H1 (cell line): ENCODE measurements at regions of chr17 and their contacts with region 1.

Region 1: GRCh38 chr17:37373530-37374159 is 2.1 kb upstream of the C17orf78 start:
- DNase-seq: peak; percentile 66 to 67
- H3K4me3 ChIP-seq: no peak overlapping the region
- H3K27ac ChIP-seq: no peak overlapping the region
- H3K4me1 ChIP-seq: no peaks in the 10 kb centered on the region; a peak in 1 of 7 replicates
- H3K27me3 ChIP-seq: no peaks in the 10 kb centered on the region
- CTCF ChIP-seq: peak; percentile 69 to 100 (median 100)
- EP300 ChIP-seq: no peak
- POLR2A ChIP-seq: no peak
- RAD21 ChIP-seq: peak; percentile 99

Region 2: GRCh38 chr17:37299257-37299980 is 74.2 kb before region 1 on chr17:
- CTCF ChIA-PET with region 1: interaction called, 15 read pairs
- POLR2A ChIA-PET with region 1: no interaction called
- DNase-seq: peak in 1 of 2 experiments; percentile 35
- H3K4me3 ChIP-seq: no peak overlapping the region
- H3K27ac ChIP-seq: peak overlapping the region; percentile 49; the same call in 1 of the 2 replicates
- H3K4me1 ChIP-seq: peaks cover 9 to 25% (median 16%) of the 10 kb centered on the region in 4 experiments; a peak in 5 of 7 replicates
- H3K27me3 ChIP-seq: no peaks in the 10 kb centered on the region
- CTCF ChIP-seq: no peak
- EP300 ChIP-seq: no peak
- POLR2A ChIP-seq: no peak
- RAD21 ChIP-seq: no peak

Region 3: DNA sequence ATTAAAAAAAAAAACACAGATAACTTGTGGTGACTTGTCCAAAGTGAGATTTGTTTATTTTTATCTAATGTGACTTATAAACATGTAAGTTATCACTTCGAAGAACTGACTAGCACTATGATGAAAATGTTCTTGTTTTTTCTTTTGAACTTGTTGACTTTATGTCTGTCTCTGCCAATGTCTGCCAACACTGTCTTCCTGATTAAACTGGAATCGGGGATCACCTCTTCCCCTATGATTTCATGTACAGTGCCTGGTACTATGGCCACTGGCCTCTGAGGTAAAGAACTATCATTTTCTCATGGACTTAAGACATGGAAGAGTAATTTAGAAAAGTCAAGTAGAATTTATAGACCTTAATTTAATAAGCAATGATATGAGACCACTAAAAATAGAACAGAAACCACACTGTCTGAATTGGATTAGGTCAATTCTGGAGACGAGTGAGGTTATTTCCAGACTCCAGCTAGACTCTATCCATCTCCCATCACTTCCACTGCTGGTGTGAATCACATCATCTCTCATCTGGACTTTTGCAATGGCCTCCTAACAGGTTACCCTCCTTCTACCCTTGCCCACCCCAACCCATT is 11.0 kb after region 1 on chr17:
- CTCF ChIA-PET with region 1: interaction called, 126 read pairs
- POLR2A ChIA-PET with region 1: interaction called, 3 read pairs
- DNase-seq: no peak
- H3K4me3 ChIP-seq: no peak overlapping the region
- H3K27ac ChIP-seq: no peak overlapping the region
- H3K4me1 ChIP-seq: no peaks in the 10 kb centered on the region
- H3K27me3 ChIP-seq: no peaks in the 10 kb centered on the region
- CTCF ChIP-seq: no peak
- EP300 ChIP-seq: no peak
- POLR2A ChIP-seq: no peak
- RAD21 ChIP-seq: no peak

Region 4: GRCh38 chr17:37406635-37407461 is 33.2 kb after region 1 on chr17 and contains the starts of genes ACACA and TADA2A:
- CTCF ChIA-PET with region 1: interaction called, 11 read pairs
- POLR2A ChIA-PET with region 1: interaction called, 4 read pairs
- DNase-seq: peak; percentile 25 to 83
- H3K4me3 ChIP-seq: peak within 1 kb of the TSS; percentile 87 to 93 (median 91)
- H3K27ac ChIP-seq: peak within 1 kb of the TSS; percentile 89
- H3K4me1 ChIP-seq: peaks cover 0 to 3% (median 0%) of the 10 kb centered on the region in 4 experiments; a peak in 2 of 7 replicates
- H3K27me3 ChIP-seq: no peaks in the 10 kb centered on the region
- CTCF ChIP-seq: no peak
- EP300 ChIP-seq: no peak
- POLR2A ChIP-seq: peak; percentile 75 to 91
- RAD21 ChIP-seq: no peak
- total RNA-seq, gene ACACA: 160 and 171 TPM in 2 replicates
- total RNA-seq, gene TADA2A: 18.2 and 18.5 TPM in 2 replicates